Activated B cell treated with CpG ODN at 0.5 μM for 24 hours (primary cell): ENCODE measurements at regions of chr1 and their contacts with region 1.

Region 1: DNA sequence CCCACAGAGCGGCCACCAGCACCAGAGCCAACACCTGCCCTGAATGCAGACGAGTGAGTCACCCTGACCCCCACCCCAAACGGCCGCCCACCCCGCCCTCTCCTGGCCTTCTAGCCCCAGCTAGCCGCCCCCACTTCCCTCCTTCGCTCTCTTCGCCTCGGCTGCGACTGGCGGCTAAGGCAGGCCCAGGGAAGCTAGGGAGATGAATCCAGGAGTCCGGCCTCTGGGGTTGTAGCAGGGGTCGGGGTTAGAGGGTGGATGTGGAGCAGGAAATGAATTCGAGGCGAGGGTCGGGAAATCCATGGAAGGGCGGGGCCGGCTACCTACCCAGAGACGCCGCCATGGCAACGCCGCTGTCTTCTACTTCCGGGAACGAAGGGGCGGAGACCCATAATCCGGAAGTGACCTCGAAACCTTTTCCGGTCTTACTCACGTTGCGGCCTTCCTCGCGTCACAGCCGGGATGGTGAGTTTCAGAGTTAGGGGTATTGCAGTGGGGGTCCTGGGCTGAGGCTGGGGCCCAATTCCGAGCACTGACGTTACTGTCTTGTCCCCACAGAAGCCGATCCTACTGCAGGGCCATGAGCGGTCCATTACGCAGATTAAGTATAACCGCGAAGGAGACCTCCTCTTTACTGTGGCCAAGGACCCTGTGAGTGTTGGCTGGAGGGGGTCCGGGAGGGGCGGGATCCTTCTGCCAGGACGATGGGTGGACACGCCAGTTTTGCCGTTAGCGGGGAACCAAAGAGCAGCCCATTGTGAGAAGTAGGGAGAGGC is at the starts of genes EIF3I and TMEM234:
- DNase-seq: peak; percentile 80
- ATAC-seq: peak; percentile 85
- H3K4me3 Mint-ChIP-seq: peak within 1 kb of the TSS; percentile 96
- H3K27ac Mint-ChIP-seq: peak within 1 kb of the TSS; percentile 95
- H3K4me1 Mint-ChIP-seq: peaks cover 50% of the 10 kb centered on the region
- H3K27me3 Mint-ChIP-seq: no peaks in the 10 kb centered on the region
- CTCF ChIP-seq: no peak
- total RNA-seq, gene EIF3I: 196 and 213 TPM in 2 replicates
- total RNA-seq, gene TMEM234: 31.8 and 35.5 TPM in 2 replicates

Region 2: GRCh38 chr1:32179443-32180185 is 42.6 kb before region 1 on chr1 and contains the start of gene TXLNA:
- CTCF ChIA-PET with region 1: no interaction called
- POLR2A ChIA-PET with region 1: interaction called, 7 read pairs
- intact Hi-C with region 1: loop called (anchors 1 kb)
- DNase-seq: peak; percentile 89
- ATAC-seq: peak; percentile 91
- H3K4me3 Mint-ChIP-seq: peak within 1 kb of the TSS; percentile 90
- H3K27ac Mint-ChIP-seq: peak within 1 kb of the TSS; percentile 98
- H3K4me1 Mint-ChIP-seq: peaks cover 40% of the 10 kb centered on the region
- H3K27me3 Mint-ChIP-seq: no peaks in the 10 kb centered on the region
- CTCF ChIP-seq: no peak
- total RNA-seq, gene TXLNA: 52.0 and 54.1 TPM in 2 replicates

Region 3: GRCh38 chr1:32200226-32201010 is 21.8 kb before region 1 on chr1 and contains the start of gene CCDC28B:
- CTCF ChIA-PET with region 1: interaction called, 23 read pairs
- POLR2A ChIA-PET with region 1: interaction called, 16 read pairs
- intact Hi-C with region 1: loop called (anchors 1 kb)
- DNase-seq: peak; percentile 62
- ATAC-seq: peak; percentile 51
- H3K4me3 Mint-ChIP-seq: peak within 1 kb of the TSS; percentile 87
- H3K27ac Mint-ChIP-seq: peak within 1 kb of the TSS; percentile 87
- H3K4me1 Mint-ChIP-seq: peaks cover 49% of the 10 kb centered on the region
- H3K27me3 Mint-ChIP-seq: no peaks in the 10 kb centered on the region
- CTCF ChIP-seq: no peak
- total RNA-seq, gene CCDC28B: 50.4 and 56.9 TPM in 2 replicates

Region 4: GRCh38 chr1:32205401-32206370 is 16.5 kb before region 1 on chr1 and contains the start of gene IQCC:
- CTCF ChIA-PET with region 1: interaction called, 23 read pairs
- POLR2A ChIA-PET with region 1: interaction called, 18 read pairs
- intact Hi-C with region 1: loop called (anchors 1 kb)
- DNase-seq: peak; percentile 76
- ATAC-seq: peak; percentile 45
- H3K4me3 Mint-ChIP-seq: peak within 1 kb of the TSS; percentile 85
- H3K27ac Mint-ChIP-seq: peak within 1 kb of the TSS; percentile 41
- H3K4me1 Mint-ChIP-seq: peaks cover 74% of the 10 kb centered on the region
- H3K27me3 Mint-ChIP-seq: no peaks in the 10 kb centered on the region
- CTCF ChIP-seq: no peak
- total RNA-seq, gene IQCC: 3.5 and 4.2 TPM in 2 replicates

Region 5: GRCh38 chr1:32240140-32240951 is 18.2 kb after region 1 on chr1:
- CTCF ChIA-PET with region 1: interaction called, 12 read pairs
- POLR2A ChIA-PET with region 1: interaction called, 33 read pairs
- intact Hi-C with region 1: loop called (anchors 1 kb)
- DNase-seq: peak; percentile 68
- ATAC-seq: peak; percentile 77
- H3K4me3 Mint-ChIP-seq: peak overlapping the region; percentile 89
- H3K27ac Mint-ChIP-seq: peak overlapping the region; percentile 87
- H3K4me1 Mint-ChIP-seq: peaks cover 21% of the 10 kb centered on the region
- H3K27me3 Mint-ChIP-seq: no peaks in the 10 kb centered on the region
- CTCF ChIP-seq: no peak

Region 6: DNA sequence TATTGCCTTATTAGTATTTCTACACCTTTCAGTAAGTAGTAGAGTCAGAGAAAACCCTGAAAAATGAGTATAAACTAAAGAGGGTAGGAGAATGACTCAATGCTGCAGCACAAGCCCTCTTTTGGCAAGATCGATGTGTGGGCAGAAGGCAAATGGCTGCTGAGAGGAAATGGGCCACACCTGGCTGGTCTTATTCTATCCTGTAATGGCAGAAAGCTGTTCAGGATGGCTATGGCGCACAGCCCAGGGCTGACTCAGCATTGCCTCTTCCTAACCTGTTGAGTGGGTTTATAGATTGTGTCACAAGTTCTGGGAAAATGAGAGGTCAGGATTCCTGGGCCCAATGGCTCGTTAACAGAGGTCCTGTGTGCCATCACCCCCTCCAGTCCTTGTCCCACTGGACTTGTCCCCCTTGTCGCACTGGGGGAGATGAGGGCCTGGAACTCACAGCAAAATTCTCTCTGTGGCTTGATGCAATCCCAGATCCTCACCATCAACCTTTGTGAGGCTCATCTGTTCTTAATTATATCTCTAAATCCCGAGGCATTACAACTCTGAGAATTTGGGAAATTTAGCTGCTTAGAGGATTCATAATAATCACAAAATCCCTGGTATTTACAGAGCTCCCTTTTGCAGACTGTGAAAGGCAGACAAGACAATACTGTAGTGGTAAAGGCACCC is 1654.9 kb after region 1 on chr1:
- CTCF ChIA-PET with region 1: no interaction called
- POLR2A ChIA-PET with region 1: no interaction called
- intact Hi-C with region 1: no loop called
- DNase-seq: no peak
- ATAC-seq: no peak
- H3K4me3 Mint-ChIP-seq: no peak overlapping the region
- H3K27ac Mint-ChIP-seq: no peak overlapping the region
- H3K4me1 Mint-ChIP-seq: no peaks in the 10 kb centered on the region
- H3K27me3 Mint-ChIP-seq: no peaks in the 10 kb centered on the region
- CTCF ChIP-seq: no peak